CD8-positive, alpha-beta T cell (primary cell): ENCODE measurements at regions of chr17 and their contacts with region 1.

Region 1: DNA sequence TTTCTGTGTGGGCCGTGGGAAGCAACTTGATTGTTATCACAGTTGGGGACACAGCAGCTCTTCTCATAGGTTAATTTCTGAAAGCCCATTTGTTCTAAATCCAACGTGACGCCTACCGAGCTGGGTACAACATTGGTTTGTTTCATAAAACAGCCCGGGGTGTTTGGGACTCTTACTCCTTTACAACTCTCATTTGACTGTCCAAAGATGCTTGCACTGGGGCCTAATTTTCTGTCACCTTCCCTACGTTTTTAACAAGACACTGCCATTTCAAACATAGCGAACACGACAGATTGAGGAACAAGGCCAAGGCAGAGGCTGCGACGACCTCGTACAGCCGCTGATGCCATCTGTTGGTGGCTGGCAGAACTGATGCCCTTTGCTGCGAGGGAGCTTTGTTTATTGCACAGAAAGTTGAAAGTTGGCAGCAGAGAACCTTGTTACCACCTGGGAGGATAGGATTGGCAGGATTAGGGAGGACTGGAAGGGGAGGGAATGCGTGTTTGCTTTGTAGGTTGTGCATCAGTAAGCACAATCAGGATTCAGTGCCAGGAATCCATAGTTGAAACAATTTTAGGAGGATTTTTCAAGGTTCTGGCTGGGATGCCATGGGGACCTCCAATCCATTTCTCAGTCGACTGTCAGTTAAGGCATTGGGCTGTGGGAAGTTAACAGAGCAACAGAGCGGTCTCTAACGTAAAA is 98.3 kb downstream of the PITPNC1 start:
- DNase-seq: peak; percentile 76 to 94 (median 87)
- ATAC-seq: peak; percentile 77
- H3K4me3 ChIP-seq: peak overlapping the region; percentile 18 to 27
- H3K4me3 Mint-ChIP-seq: peak overlapping the region; percentile 73
- H3K27ac ChIP-seq: peak overlapping the region; percentile 47 to 81
- H3K27ac Mint-ChIP-seq: peak overlapping the region; percentile 95
- H3K4me1 ChIP-seq: peaks cover 72% of the 10 kb centered on the region
- H3K4me1 Mint-ChIP-seq: peaks cover 72% of the 10 kb centered on the region
- H3K27me3 ChIP-seq: no peaks in the 10 kb centered on the region
- H3K27me3 Mint-ChIP-seq: no peaks in the 10 kb centered on the region
- CTCF ChIP-seq: peak; percentile 95

Region 2: GRCh38 chr17:67366193-67367157 is 108.9 kb before region 1 on chr17 and contains the start of gene PSMD12:
- CTCF ChIA-PET with region 1: interaction called, 502 read pairs
- POLR2A ChIA-PET with region 1: interaction called, 3 read pairs
- intact Hi-C with region 1: no loop called
- DNase-seq: peak; percentile 88 to 97 (median 93)
- ATAC-seq: peak; percentile 97
- H3K4me3 ChIP-seq: peak within 1 kb of the TSS; percentile 87 to 94
- H3K4me3 Mint-ChIP-seq: peak within 1 kb of the TSS; percentile 92
- H3K27ac ChIP-seq: peak within 1 kb of the TSS; percentile 86 to 95
- H3K27ac Mint-ChIP-seq: peak within 1 kb of the TSS; percentile 95
- H3K4me1 ChIP-seq: peaks cover 40% of the 10 kb centered on the region
- H3K4me1 Mint-ChIP-seq: peaks cover 43% of the 10 kb centered on the region
- H3K27me3 ChIP-seq: no peaks in the 10 kb centered on the region
- H3K27me3 Mint-ChIP-seq: no peaks in the 10 kb centered on the region
- CTCF ChIP-seq: no peak
- total RNA-seq, gene PSMD12: 52.1 to 54.9 TPM

Region 3: GRCh38 chr17:67400193-67400592 is 75.2 kb before region 1 on chr17:
- CTCF ChIA-PET with region 1: interaction called, 18 read pairs
- POLR2A ChIA-PET with region 1: interaction called, 7 read pairs
- intact Hi-C with region 1: loop called in 1 of 2 experiments (anchors 1 kb)
- DNase-seq: peak in 2 of 9 experiments; percentile 55 to 81
- ATAC-seq: peak; percentile 24
- H3K4me3 ChIP-seq: peak overlapping the region in 1 of 2 experiments; percentile 8
- H3K4me3 Mint-ChIP-seq: peak overlapping the region; percentile 71
- H3K27ac ChIP-seq: peak overlapping the region; percentile 39 to 78
- H3K27ac Mint-ChIP-seq: peak overlapping the region; percentile 92
- H3K4me1 ChIP-seq: peaks cover 76% of the 10 kb centered on the region
- H3K4me1 Mint-ChIP-seq: peaks cover 82% of the 10 kb centered on the region
- H3K27me3 ChIP-seq: no peaks in the 10 kb centered on the region
- H3K27me3 Mint-ChIP-seq: no peaks in the 10 kb centered on the region
- CTCF ChIP-seq: no peak

Region 4: DNA sequence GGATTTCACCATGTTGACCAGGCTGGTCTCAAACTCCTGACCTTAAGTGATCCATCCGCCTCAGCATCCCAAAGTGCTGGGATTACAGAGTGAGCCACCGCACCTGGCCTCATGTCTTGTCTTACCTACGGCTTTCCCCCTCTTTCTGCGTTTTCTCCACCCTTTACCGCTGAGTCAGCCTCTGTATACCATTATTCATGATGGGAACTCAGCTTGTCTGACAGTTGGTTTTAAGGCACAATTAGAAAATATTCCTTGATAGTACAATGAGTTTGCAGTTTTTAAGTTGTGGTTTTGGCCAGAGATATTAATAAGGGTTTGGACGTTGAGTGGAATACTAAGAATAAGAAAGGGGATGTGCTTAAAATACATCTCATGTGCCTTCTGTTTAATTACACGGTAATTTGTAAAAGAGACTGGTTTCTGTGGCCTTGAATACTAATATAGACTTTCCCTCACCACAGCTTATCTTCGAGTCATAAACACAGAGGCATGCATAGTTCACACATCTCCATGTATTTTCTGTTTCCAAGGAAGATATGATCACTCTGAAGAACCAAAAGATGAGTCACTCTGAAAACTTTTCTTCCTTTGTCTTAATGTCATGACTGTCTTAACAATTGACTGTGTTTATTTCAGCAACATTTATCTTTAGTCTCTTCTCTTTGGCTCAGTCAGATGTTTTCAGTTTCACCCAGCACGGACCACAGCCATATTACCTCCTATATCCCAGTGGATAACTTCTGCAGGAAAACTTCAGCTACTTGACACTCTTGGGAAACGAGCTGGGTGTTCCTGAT is 43.9 kb before region 1 on chr17:
- CTCF ChIA-PET with region 1: interaction called, 40 read pairs
- POLR2A ChIA-PET with region 1: interaction called, 13 read pairs
- intact Hi-C with region 1: no loop called
- DNase-seq: peak in 3 of 9 experiments; percentile 26 to 55 (median 27)
- ATAC-seq: no peak
- H3K4me3 ChIP-seq: no peak overlapping the region
- H3K4me3 Mint-ChIP-seq: no peak overlapping the region
- H3K27ac ChIP-seq: peak overlapping the region in 1 of 2 experiments; percentile 40
- H3K27ac Mint-ChIP-seq: peak overlapping the region; percentile 67
- H3K4me1 ChIP-seq: peaks cover 54% of the 10 kb centered on the region
- H3K4me1 Mint-ChIP-seq: peaks cover 72% of the 10 kb centered on the region
- H3K27me3 ChIP-seq: no peaks in the 10 kb centered on the region
- H3K27me3 Mint-ChIP-seq: no peaks in the 10 kb centered on the region
- CTCF ChIP-seq: no peak

Region 5: DNA sequence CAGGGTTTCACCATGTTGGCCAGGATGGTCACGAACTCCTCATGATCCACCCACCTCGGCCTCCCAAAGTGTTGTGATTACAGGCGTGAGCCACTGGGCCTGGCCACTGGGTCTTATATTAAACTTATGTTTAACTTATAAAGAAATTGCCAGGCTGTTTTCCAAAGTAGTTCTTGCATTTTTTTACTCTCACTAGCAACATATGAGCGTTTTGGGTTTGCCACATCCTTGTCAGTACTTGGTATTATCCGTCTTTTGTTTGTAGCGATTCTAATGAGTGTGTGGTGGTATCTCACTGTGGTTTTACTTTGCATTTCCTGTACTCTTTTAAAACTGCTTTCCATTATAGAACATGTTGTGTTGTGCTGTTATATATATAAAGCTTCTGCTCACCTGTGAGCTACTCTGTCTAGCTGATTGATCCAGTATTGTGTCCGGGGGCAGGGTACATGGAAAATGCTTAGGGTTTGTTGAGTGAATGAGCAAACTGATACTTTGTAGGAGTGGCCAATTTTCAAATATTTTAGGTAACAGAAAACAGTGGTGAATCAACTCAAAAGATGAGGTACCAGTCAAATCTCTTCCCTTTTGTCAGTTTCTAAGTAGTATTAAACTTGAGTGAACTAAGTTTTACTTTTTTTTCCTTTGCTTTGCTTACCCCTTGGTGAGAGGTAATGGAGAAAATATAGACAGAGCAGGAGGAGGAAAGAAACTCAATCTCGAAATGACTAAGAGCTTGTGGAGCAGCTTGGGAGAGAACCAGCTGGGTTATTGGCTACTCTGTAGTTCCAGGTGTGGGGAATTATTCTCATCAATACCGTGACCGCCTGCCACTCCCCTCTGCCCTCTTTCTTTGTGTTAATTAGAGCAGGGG is 22.5 kb before region 1 on chr17:
- CTCF ChIA-PET with region 1: interaction called, 84 read pairs
- POLR2A ChIA-PET with region 1: interaction called, 26 read pairs
- intact Hi-C with region 1: loop called (anchors 1 kb)
- DNase-seq: peak in 4 of 9 experiments; percentile 50 to 89 (median 66)
- ATAC-seq: peak; percentile 79
- H3K4me3 ChIP-seq: peak overlapping the region in 1 of 2 experiments; percentile 15
- H3K4me3 Mint-ChIP-seq: peak overlapping the region; percentile 77
- H3K27ac ChIP-seq: peak overlapping the region; percentile 59 to 72
- H3K27ac Mint-ChIP-seq: peak overlapping the region; percentile 97
- H3K4me1 ChIP-seq: peaks cover 91% of the 10 kb centered on the region
- H3K4me1 Mint-ChIP-seq: peaks cover 93% of the 10 kb centered on the region
- H3K27me3 ChIP-seq: no peaks in the 10 kb centered on the region
- H3K27me3 Mint-ChIP-seq: no peaks in the 10 kb centered on the region
- CTCF ChIP-seq: no peak

Region 6: GRCh38 chr17:67491009-67491680 is 15.8 kb after region 1 on chr17:
- CTCF ChIA-PET with region 1: interaction called, 13 read pairs
- POLR2A ChIA-PET with region 1: interaction called, 9 read pairs
- intact Hi-C with region 1: no loop called
- DNase-seq: peak in 3 of 9 experiments; percentile 40 to 63 (median 42)
- ATAC-seq: no peak
- H3K4me3 ChIP-seq: no peak overlapping the region
- H3K4me3 Mint-ChIP-seq: peak overlapping the region; percentile 49
- H3K27ac ChIP-seq: peak overlapping the region in 1 of 2 experiments; percentile 32
- H3K27ac Mint-ChIP-seq: peak overlapping the region; percentile 76
- H3K4me1 ChIP-seq: peaks cover 46% of the 10 kb centered on the region
- H3K4me1 Mint-ChIP-seq: peaks cover 86% of the 10 kb centered on the region
- H3K27me3 ChIP-seq: no peaks in the 10 kb centered on the region
- H3K27me3 Mint-ChIP-seq: no peaks in the 10 kb centered on the region
- CTCF ChIP-seq: no peak

Region 7: DNA sequence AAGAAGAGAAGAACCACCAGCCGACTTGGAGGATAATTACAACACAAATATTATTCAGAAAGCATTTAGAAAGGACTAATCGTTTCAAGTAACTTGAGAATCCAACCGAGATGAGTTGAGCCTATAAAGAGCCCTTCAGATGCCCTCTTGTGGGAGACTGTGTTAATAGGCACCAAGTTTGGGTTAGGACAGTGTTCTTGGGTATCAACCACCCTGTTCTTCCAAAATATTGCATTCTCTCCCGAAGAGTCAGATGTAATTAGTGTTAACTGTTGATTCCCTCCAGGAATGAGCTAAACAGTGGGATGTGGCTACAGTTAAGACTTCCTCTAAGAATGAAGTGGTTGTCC is 154.6 kb after region 1 on chr17:
- CTCF ChIA-PET with region 1: interaction called, 10 read pairs
- POLR2A ChIA-PET with region 1: no interaction called
- intact Hi-C with region 1: no loop called
- DNase-seq: peak in 2 of 9 experiments; percentile 35 to 49
- ATAC-seq: peak; percentile 34
- H3K4me3 ChIP-seq: no peak overlapping the region
- H3K4me3 Mint-ChIP-seq: no peak overlapping the region
- H3K27ac ChIP-seq: no peak overlapping the region
- H3K27ac Mint-ChIP-seq: peak overlapping the region; percentile 46
- H3K4me1 ChIP-seq: no peaks in the 10 kb centered on the region
- H3K4me1 Mint-ChIP-seq: peaks cover 16% of the 10 kb centered on the region
- H3K27me3 ChIP-seq: no peaks in the 10 kb centered on the region
- H3K27me3 Mint-ChIP-seq: no peaks in the 10 kb centered on the region
- CTCF ChIP-seq: no peak